ENCODE measurements at regions of chr3 and their contacts with region 1.

Region 1: DNA sequence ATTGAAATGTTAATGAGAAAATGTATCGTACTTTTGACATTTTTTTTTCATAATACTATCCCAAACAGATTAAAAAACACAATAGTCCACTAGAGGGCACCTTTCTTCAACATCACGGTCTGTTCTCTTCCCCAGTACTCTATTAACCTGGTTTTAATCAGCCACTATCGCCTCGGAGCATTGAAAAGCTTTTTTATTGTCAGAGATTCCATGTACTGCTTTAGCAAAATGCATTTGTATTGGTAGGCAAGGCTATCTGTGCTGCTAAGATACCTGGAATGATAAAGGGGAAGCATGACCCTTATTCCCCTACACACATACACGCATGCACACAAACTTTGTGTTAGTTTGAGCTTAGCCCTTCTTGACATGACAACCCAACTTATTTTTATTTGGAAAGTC is 160.1 kb upstream of the IL12A start:
- DNase-seq: peak; percentile 47
- H3K4me3 ChIP-seq: no peak overlapping the region
- H3K27ac ChIP-seq: peak overlapping the region; percentile 27
- H3K4me1 ChIP-seq: peaks cover 55% of the 10 kb centered on the region
- H3K27me3 ChIP-seq: no peaks in the 10 kb centered on the region
- CTCF ChIP-seq: peak; percentile 46 to 51

Region 2: DNA sequence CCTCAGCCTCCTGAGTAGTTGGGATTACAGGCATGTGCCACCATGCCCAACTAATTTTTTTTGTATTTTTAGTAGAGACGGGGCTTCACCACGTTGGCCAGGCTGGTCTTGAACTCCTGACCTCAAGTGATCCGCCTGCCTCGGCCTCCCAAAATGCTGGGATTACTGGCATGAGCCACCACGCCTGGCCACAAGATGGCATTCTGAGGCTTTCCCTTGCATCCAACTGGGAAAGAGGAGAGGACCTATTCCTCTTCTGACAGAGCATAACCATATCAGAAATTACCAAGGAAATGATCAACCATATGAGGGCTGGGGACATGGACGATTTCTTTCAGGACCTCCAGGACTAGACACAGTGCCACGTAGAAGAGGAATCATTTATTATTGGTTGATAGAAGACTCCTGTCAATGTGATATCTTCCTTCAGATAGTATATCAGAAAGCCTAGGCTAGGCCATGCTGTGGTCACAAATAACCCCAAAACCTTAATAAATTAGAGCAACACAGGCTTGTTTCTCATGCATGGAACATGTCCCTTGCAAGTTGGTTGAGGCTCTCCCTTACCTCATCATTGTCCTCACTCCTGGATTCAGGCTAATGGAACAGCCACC is 212.2 kb before region 1 on chr3:
- CTCF ChIA-PET with region 1: no interaction called
- dilution Hi-C with region 1: no loop called
- in situ Hi-C with region 1: no loop called
- intact Hi-C with region 1: loop called (anchors 2 kb)
- DNase-seq: peak; percentile 48
- H3K4me3 ChIP-seq: no peak overlapping the region
- H3K27ac ChIP-seq: no peak overlapping the region
- H3K4me1 ChIP-seq: peaks cover 14% of the 10 kb centered on the region
- H3K27me3 ChIP-seq: no peaks in the 10 kb centered on the region
- CTCF ChIP-seq: peak; percentile 49 to 70

Region 3: DNA sequence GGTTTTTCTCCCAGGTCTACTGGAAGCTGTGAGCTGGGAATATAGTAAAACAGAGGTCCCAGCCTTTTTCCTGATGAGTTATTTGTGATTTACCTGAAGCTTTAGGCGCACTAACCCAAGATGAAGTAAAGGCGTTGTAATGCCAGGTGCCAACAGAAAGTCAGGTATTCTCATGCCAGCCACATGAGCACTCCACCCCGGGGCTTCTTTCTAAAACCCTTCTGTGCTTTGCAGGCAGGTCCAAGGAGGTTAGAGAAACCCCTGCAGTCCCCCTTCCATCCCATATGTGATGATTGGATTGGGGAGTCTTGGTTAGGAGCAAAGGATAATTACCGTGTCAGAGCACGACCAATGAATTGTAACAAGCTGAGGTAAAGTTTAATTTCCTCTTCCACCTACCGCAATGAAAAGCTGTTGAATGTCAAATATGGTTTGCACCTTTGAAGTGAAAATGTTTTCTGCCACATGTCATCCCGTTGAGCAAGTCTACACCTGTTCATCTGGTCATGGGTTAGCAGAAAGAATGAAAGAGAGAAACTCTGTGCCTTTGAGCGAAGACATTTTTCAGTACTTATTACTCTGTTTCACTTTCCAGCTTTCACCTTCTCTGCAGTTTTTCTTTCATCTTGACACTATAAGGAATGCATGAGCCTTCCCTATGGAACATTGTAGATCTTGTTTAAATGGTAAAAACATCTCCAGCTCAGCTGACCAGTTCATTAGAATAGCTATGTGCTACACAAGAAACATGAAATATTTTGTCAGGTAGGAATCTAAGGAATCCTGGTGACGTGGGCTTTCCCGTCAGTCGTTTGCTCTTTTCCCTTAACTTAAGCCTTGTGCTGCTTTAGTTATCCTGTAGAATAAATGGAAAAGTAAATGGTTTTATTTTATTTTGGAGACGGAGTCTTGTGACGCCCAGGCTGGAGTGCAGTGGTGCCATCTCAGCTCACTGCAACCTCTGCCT is 44.5 kb before region 1 on chr3:
- CTCF ChIA-PET with region 1: no interaction called
- dilution Hi-C with region 1: no loop called
- in situ Hi-C with region 1: no loop called
- intact Hi-C with region 1: no loop called
- DNase-seq: peak; percentile 90
- H3K4me3 ChIP-seq: peak overlapping the region; percentile 20 to 57 (median 37)
- H3K27ac ChIP-seq: peak overlapping the region; percentile 93
- H3K4me1 ChIP-seq: peaks cover 69% of the 10 kb centered on the region
- H3K27me3 ChIP-seq: no peaks in the 10 kb centered on the region
- CTCF ChIP-seq: no peak

Region 4: GRCh38 chr3:159852821-159853505 is 24.4 kb after region 1 on chr3:
- CTCF ChIA-PET with region 1: interaction called, 8 read pairs
- dilution Hi-C with region 1: no loop called
- in situ Hi-C with region 1: no loop called
- intact Hi-C with region 1: loop called (anchors 1 kb)
- DNase-seq: peak; percentile 66
- H3K4me3 ChIP-seq: peak overlapping the region; percentile 4 to 39 (median 30)
- H3K27ac ChIP-seq: peak overlapping the region; percentile 91
- H3K4me1 ChIP-seq: peaks cover 52% of the 10 kb centered on the region
- H3K27me3 ChIP-seq: no peaks in the 10 kb centered on the region
- CTCF ChIP-seq: no peak

Region 5: DNA sequence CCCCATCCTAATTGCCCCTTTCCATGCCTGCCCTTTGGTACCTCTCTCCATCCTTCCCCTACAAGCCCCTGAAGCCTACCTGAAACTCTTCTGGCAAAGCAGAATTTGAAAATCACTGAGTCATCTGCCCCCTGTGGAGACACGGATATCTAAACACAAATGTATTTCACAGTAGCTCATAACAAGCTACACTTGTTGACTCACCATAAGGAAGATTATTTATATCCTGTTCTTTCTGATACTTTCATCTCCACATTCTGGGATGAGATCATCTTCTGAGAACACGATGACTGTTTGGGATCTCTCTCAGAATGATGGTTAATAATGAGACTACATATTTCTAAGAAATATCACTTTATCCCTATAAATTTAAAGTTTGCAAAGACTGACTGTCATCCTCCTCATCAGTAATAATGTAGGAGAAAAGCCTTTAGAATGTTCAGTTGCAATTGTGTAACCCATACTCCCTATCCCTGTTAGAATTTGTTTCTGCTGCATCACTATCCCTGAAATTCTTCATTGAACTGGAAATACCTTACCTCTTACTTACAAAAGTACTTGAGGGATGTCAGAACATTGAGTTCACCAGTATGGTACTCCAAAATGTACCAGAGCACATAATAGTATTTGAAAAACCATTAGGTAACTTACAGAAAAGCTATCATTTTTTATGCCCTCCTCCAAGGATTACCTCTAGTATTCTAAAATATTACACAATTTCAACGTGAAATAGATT is 44.0 kb after region 1 on chr3:
- CTCF ChIA-PET with region 1: interaction called, 5 read pairs
- dilution Hi-C with region 1: loop called (anchors 10 kb)
- in situ Hi-C with region 1: no loop called
- intact Hi-C with region 1: loop called (anchors 1 kb)
- DNase-seq: peak; percentile 91
- H3K4me3 ChIP-seq: no peak overlapping the region
- H3K27ac ChIP-seq: peak overlapping the region; percentile 78
- H3K4me1 ChIP-seq: peaks cover 21% of the 10 kb centered on the region
- H3K27me3 ChIP-seq: no peaks in the 10 kb centered on the region
- CTCF ChIP-seq: peak in 1 of 2 donors; percentile 43

Region 6: GRCh38 chr3:159902546-159903314 is 74.2 kb after region 1 on chr3:
- CTCF ChIA-PET with region 1: no interaction called
- dilution Hi-C with region 1: no loop called
- in situ Hi-C with region 1: no loop called
- intact Hi-C with region 1: no loop called
- DNase-seq: no peak
- H3K4me3 ChIP-seq: no peak overlapping the region
- H3K27ac ChIP-seq: no peak overlapping the region
- H3K4me1 ChIP-seq: peaks cover 4% of the 10 kb centered on the region
- H3K27me3 ChIP-seq: no peaks in the 10 kb centered on the region
- CTCF ChIP-seq: no peak

Region 7: DNA sequence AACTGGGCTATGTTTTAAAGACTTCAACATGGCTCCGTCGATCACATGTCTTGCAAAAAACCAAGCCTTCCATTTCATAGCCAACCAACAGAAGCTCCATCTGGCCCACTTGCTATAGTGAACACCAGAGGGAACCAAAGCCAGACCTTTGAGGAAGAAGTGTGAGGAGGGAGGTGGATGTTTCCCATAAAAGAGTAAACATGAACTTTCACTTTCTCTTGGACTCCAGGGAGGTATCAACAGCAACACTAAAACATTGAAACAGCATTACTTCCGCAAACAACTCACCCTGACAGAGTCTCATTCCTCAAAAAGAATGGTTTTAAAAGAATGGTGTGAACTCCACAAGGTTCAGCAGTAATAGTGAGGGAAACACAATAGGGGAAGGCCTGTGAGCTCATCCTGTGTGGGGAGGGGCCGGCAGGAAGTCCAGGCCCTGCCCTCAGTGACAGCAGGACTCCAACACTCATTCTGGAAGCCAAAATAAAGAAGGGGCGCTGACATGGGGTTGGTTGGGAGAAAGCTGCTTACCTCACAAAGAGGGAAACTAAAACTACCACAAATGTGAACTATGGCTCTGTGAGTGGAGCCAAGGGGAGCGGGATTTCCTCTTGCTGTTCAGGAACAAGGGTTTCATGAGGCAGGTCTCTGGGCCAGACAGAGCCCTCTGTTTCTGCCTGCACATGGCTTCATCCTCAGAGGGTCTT is 101.0 kb after region 1 on chr3:
- CTCF ChIA-PET with region 1: no interaction called
- dilution Hi-C with region 1: no loop called
- in situ Hi-C with region 1: no loop called
- intact Hi-C with region 1: loop called (anchors 2 kb)
- DNase-seq: peak; percentile 50
- H3K4me3 ChIP-seq: no peak overlapping the region
- H3K27ac ChIP-seq: peak overlapping the region; percentile 85
- H3K4me1 ChIP-seq: peaks cover 28% of the 10 kb centered on the region
- H3K27me3 ChIP-seq: no peaks in the 10 kb centered on the region
- CTCF ChIP-seq: peak; percentile 20 to 24

Region 8: GRCh38 chr3:159988617-159989271 is 160.2 kb after region 1 on chr3 and contains the start of gene IL12A:
- CTCF ChIA-PET with region 1: interaction called, 4 read pairs
- dilution Hi-C with region 1: no loop called
- in situ Hi-C with region 1: no loop called
- intact Hi-C with region 1: loop called (anchors 5 kb)
- DNase-seq: peak; percentile 54
- H3K4me3 ChIP-seq: peak within 1 kb of the TSS; percentile 64 to 79 (median 79)
- H3K27ac ChIP-seq: no peak within 1 kb of the TSS
- H3K4me1 ChIP-seq: peaks cover 19% of the 10 kb centered on the region
- H3K27me3 ChIP-seq: no peaks in the 10 kb centered on the region
- CTCF ChIP-seq: peak; percentile 83 to 95
- total RNA-seq, gene IL12A: 0.83 to 1.3 TPM

Region 9: GRCh38 chr3:160003520-160004128 is 175.1 kb after region 1 on chr3:
- CTCF ChIA-PET with region 1: interaction called, 5 read pairs
- dilution Hi-C with region 1: no loop called
- in situ Hi-C with region 1: loop called (anchors 5 to 10 kb)
- intact Hi-C with region 1: loop called (anchors 1 kb)
- DNase-seq: peak; percentile 41
- H3K4me3 ChIP-seq: no peak overlapping the region
- H3K27ac ChIP-seq: no peak overlapping the region
- H3K4me1 ChIP-seq: no peaks in the 10 kb centered on the region
- H3K27me3 ChIP-seq: no peaks in the 10 kb centered on the region
- CTCF ChIP-seq: peak; percentile 44 to 69

Measured in mammary epithelial cell (primary cell).